ENCODE measurements at regions of chr9 and their contacts with region 1.

Region 1: GRCh38 chr9:116334546-116335041 is 181.0 kb downstream of the PAPPA start:
- DNase-seq: no peak
- ATAC-seq: no peak
- H3K4me3 ChIP-seq: no peak overlapping the region
- H3K27ac ChIP-seq: no peak overlapping the region
- H3K4me1 ChIP-seq: peaks cover 0 to 5% (median 0%) of the 10 kb centered on the region in 12 donors
- H3K27me3 ChIP-seq: no peaks in the 10 kb centered on the region
- CTCF ChIP-seq: no peak
- POLR2A ChIP-seq: no peak

Region 2: DNA sequence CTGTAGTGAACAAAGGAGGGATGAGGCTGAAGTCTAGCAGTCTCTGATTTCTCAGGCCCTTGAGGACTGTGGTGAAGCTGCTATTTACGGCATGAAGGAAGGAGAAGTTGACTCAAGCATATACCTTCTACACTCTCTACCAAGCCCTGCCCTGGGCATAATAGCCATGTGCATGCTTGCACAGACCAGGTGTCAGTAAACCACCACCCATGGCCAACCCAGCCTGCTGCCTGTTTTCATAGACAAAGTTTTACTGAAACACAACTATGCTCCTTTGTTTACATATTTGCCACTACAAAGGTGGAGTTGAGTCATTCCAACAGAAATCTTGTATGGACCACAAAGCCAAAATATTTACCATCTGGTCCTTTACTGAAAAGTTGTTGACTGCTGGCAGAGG is 54.1 kb before region 1 on chr9:
- intact Hi-C with region 1: loop called in 1 of 10 experiments (anchors 5 kb)
- DNase-seq: no peak
- ATAC-seq: no peak
- H3K4me3 ChIP-seq: no peak overlapping the region
- H3K27ac ChIP-seq: no peak overlapping the region
- H3K4me1 ChIP-seq: peaks cover 0 to 8% (median 0%) of the 10 kb centered on the region in 12 donors
- H3K27me3 ChIP-seq: no peaks in the 10 kb centered on the region
- CTCF ChIP-seq: no peak
- POLR2A ChIP-seq: no peak